Ovary (tissue), 10 donors: ENCODE measurements at regions of chr14 and their contacts with region 1.

Region 1: GRCh38 chr14:21437063-21437901 is 18.6 kb downstream of the CHD8 start:
- DNase-seq: peak; percentile 99 to 100 (median 99)
- H3K4me3 ChIP-seq: peak overlapping the region; percentile 91
- H3K27ac ChIP-seq: peak overlapping the region; percentile 66 to 86
- H3K4me1 ChIP-seq: peaks cover 9% of the 10 kb centered on the region
- H3K27me3 ChIP-seq: no peaks in the 10 kb centered on the region
- CTCF ChIP-seq: no peak
- EP300 ChIP-seq: no peak
- POLR2A ChIP-seq: peak; percentile 44

Region 2: DNA sequence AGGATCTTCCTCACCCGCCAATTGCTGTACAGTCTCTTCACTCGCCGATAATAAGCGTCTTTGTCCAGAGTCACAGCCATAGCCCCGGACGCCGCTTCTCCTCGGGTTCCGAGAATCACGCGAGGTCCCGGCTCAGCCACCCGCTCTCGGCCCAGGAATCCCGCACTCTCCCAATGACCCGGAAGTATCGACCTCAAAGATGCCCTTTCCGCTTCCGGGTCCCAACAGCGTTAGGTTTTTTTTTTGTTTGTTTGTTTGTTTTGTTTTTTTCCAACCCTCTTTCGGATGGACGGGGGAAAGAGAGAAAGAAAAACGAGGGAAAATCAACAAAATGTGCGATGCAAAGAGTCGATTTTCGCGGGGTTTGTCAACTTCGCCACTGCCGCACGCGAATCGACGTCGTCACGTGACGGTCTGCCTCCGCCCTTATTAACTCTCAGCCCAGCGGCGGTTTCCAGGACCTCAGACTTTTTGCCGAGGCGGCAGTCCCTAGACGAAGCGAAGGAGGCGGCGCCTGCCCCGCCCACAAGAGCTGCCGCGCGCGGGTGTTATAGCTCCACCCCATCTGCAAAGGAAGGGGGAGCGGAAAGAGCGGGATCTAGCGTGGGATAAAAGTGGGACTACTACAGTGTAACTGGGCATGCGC is 53.3 kb before region 1 on chr14 and contains the start of gene SUPT16H:
- intact Hi-C with region 1: loop called in 1 of 4 experiments (anchors 10 kb)
- DNase-seq: peak; percentile 94 to 97 (median 94)
- H3K4me3 ChIP-seq: peak within 1 kb of the TSS; percentile 95
- H3K27ac ChIP-seq: peak within 1 kb of the TSS; percentile 31 to 85
- H3K4me1 ChIP-seq: no peaks in the 10 kb centered on the region
- H3K27me3 ChIP-seq: no peaks in the 10 kb centered on the region
- CTCF ChIP-seq: peak in 1 of 3 donors; percentile 13
- EP300 ChIP-seq: peak; percentile 48
- POLR2A ChIP-seq: peak; percentile 61
- total RNA-seq, gene SUPT16H: 41.3 to 75.3 (median 64.2) TPM